H1 (cell line): ENCODE measurements at regions of chr5 and their contacts with region 1.

Region 1: DNA sequence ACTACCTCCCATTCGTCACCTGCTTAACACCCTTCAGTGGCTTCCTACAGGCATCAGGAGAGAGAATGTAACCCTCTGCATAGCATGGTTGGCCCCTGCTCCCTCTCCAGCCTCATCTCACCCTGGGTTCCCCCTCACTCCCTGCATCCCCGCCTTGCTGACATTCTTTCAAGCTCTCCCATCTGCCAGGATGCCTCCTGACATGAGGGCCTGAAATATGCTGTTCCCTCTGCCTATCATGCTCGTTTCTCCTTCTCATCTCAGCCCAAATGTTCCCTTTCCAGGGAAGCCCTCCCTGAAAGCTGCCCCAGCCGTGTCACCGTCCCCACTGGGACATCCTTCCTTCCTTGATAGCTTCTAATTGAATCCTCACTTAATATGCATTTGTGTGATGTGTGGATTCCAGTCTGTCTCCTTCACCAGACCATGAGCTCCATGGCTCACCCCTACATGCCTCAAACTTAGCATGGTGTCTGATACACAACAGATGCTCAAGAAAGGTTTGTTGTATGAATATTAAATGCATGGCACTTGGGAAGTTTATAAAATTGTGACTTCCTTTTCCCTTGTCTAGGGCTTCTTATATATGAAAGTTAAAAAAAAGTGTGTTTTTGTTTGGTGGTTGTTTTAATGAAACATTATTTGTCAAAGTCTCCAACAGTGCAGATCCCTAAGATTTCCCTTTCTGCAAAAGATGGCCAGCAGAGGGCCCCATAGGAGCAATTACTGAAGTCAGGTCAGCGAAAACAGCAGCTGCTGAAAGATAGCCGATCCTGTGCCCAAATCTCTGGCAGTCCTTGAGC is 7.3 kb upstream of the C5orf58 start:
- DNase-seq: peak in 1 of 2 experiments; percentile 84
- H3K4me3 ChIP-seq: no peak overlapping the region
- H3K27ac ChIP-seq: no peak overlapping the region
- H3K4me1 ChIP-seq: peaks cover 0 to 7% (median 2%) of the 10 kb centered on the region in 4 experiments; a peak in 4 of 7 replicates
- H3K27me3 ChIP-seq: peaks cover 0 to under 1% (median under 1%) of the 10 kb centered on the region in 4 experiments; a peak in 2 of 7 replicates
- CTCF ChIP-seq: peak; percentile 29 to 85 (median 65)
- EP300 ChIP-seq: no peak
- POLR2A ChIP-seq: no peak
- RAD21 ChIP-seq: peak; percentile 95 to 96

Region 2: DNA sequence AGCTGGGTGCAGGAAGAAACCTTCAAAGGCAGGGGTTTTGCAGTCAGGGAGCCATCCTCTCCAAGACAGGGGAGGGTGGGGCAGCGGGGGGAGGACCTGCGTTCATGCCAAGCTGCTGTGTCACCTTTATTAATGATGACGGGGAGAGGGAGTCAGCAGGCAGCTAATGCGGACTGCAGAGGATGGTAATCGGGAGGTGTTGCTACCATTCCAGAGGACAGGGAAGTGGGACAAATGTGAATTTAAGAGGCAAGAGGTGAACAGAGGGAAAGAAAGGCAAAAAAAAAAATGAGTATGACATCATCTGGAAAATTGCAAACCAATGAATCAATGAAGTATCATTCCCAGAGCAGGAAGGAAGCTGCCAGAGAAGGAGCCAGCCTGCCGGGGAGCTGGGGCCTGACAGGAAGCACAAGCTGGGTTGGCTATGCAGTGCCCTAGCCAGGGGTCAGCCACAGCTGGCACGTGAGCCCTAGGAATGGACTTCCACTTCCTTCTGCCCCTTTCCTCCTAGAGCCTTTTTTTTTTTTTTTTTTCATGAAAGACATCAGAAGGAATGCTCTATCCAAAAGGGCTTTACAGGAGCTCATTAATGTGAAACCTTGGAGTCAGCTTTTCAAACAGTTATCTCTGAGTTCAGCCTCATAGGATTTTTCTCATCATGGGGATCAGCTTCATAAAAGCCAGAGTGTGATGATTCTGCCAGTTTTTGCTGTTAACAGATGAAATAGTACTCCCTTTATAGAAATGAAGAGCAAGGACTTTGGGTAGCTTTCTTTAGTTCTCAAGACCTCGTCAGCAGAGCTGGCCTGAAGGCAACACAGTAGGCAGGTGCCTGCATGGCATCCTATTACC is 254.4 kb before region 1 on chr5:
- CTCF ChIA-PET with region 1: no interaction called
- POLR2A ChIA-PET with region 1: no interaction called
- DNase-seq: no peak
- H3K4me3 ChIP-seq: no peak overlapping the region
- H3K27ac ChIP-seq: no peak overlapping the region
- H3K4me1 ChIP-seq: peaks cover 0 to 4% (median 0%) of the 10 kb centered on the region in 4 experiments; a peak in 3 of 7 replicates
- H3K27me3 ChIP-seq: peaks cover 0 to under 1% (median 0%) of the 10 kb centered on the region in 4 experiments; a peak in 3 of 7 replicates
- CTCF ChIP-seq: no peak
- EP300 ChIP-seq: no peak
- POLR2A ChIP-seq: no peak
- RAD21 ChIP-seq: no peak

Region 3: DNA sequence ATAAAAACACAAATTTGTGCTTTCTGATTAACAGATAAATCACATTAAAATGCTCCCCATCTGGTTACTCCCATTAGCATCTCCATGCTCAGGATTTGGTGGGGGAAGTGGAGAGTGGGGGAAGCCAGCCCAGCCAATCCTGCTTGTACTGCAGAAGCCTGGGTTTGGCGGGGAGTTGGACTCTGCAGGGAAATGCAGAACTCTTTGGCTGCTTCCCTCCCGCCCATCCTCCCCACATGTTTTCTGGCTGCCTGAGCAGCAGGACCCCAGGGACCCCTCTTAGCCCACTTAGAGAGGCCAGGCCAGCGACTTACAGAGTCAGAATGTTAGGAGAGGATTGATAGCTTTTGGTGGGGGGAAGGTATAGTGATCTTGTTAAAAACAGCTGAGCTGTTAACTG is 179.3 kb before region 1 on chr5:
- CTCF ChIA-PET with region 1: no interaction called
- POLR2A ChIA-PET with region 1: no interaction called
- DNase-seq: no peak
- H3K4me3 ChIP-seq: no peak overlapping the region
- H3K27ac ChIP-seq: no peak overlapping the region
- H3K4me1 ChIP-seq: peaks cover 0 to 4% (median 3%) of the 10 kb centered on the region in 4 experiments; a peak in 3 of 7 replicates
- H3K27me3 ChIP-seq: no peaks in the 10 kb centered on the region
- CTCF ChIP-seq: no peak
- EP300 ChIP-seq: no peak
- POLR2A ChIP-seq: no peak
- RAD21 ChIP-seq: no peak

Region 4: DNA sequence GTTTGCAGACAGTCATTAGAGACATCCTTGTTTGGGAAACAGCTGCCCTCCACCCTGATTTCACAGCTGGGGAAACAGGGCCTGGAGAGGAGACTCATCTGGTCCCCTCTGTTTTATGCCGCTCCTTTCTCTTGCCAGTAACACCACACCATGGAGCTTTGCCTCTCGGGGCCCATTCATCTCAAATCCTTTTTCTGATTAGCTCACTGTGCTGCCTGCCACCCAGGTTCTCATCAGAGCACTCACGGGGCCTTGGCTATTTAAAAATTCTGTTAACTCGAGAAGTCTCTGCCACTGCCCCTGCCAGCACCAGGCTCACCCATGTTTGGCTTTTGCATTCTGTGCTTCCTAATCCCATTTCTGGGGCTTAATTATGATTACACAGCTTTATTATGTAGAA is 29.6 kb before region 1 on chr5:
- CTCF ChIA-PET with region 1: interaction called, 13 read pairs
- POLR2A ChIA-PET with region 1: no interaction called
- DNase-seq: no peak
- H3K4me3 ChIP-seq: no peak overlapping the region
- H3K27ac ChIP-seq: no peak overlapping the region
- H3K4me1 ChIP-seq: no peaks in the 10 kb centered on the region; a peak in 2 of 7 replicates
- H3K27me3 ChIP-seq: no peaks in the 10 kb centered on the region
- CTCF ChIP-seq: no peak
- EP300 ChIP-seq: no peak
- POLR2A ChIP-seq: no peak
- RAD21 ChIP-seq: no peak

Region 5: DNA sequence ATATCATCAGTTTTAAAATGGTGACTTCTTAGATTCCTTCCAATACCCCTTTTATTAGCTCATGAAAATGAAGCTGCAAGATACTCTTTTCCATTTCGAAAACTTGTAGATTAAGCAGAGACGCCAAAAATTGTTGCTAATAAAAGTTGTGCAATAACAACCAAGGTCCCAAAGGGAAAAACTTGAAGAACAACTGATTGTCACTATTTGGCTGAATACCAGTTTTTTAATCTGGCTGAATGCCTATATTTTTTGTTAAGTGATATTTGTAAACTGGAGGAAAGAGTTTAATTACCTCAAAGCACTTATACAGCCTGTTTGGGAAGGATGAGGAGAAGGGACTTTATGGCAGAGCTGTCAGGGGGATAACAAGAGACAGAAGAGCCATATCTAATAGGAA is 21.8 kb after region 1 on chr5:
- CTCF ChIA-PET with region 1: interaction called, 14 read pairs
- POLR2A ChIA-PET with region 1: no interaction called
- DNase-seq: no peak
- H3K4me3 ChIP-seq: no peak overlapping the region
- H3K27ac ChIP-seq: no peak overlapping the region
- H3K4me1 ChIP-seq: peaks cover 0 to 7% (median 4%) of the 10 kb centered on the region in 4 experiments; a peak in 3 of 7 replicates
- H3K27me3 ChIP-seq: no peaks in the 10 kb centered on the region
- CTCF ChIP-seq: no peak
- EP300 ChIP-seq: no peak
- POLR2A ChIP-seq: no peak
- RAD21 ChIP-seq: no peak

Region 6: GRCh38 chr5:170333161-170333910 is 107.8 kb after region 1 on chr5:
- CTCF ChIA-PET with region 1: interaction called, 50 read pairs
- POLR2A ChIA-PET with region 1: interaction called, 4 read pairs
- DNase-seq: peak in 1 of 2 experiments; percentile 67
- H3K4me3 ChIP-seq: peak overlapping the region in 1 of 4 experiments; percentile 15; a peak in 2 of 8 replicates
- H3K27ac ChIP-seq: no peak overlapping the region
- H3K4me1 ChIP-seq: peaks cover 7 to 31% (median 23%) of the 10 kb centered on the region in 4 experiments
- H3K27me3 ChIP-seq: no peaks in the 10 kb centered on the region
- CTCF ChIP-seq: no peak
- EP300 ChIP-seq: no peak
- POLR2A ChIP-seq: no peak
- RAD21 ChIP-seq: no peak; a peak in 1 of 4 replicates

Region 7: GRCh38 chr5:170357955-170358444 is 132.5 kb after region 1 on chr5:
- CTCF ChIA-PET with region 1: interaction called, 10 read pairs
- POLR2A ChIA-PET with region 1: no interaction called
- DNase-seq: no peak
- H3K4me3 ChIP-seq: no peak overlapping the region
- H3K27ac ChIP-seq: no peak overlapping the region
- H3K4me1 ChIP-seq: peaks cover 5 to 20% (median 13%) of the 10 kb centered on the region in 4 experiments
- H3K27me3 ChIP-seq: peaks cover 0 to 4% (median 1%) of the 10 kb centered on the region in 4 experiments; a peak in 3 of 7 replicates
- CTCF ChIP-seq: no peak
- EP300 ChIP-seq: no peak
- POLR2A ChIP-seq: no peak
- RAD21 ChIP-seq: no peak

Region 8: DNA sequence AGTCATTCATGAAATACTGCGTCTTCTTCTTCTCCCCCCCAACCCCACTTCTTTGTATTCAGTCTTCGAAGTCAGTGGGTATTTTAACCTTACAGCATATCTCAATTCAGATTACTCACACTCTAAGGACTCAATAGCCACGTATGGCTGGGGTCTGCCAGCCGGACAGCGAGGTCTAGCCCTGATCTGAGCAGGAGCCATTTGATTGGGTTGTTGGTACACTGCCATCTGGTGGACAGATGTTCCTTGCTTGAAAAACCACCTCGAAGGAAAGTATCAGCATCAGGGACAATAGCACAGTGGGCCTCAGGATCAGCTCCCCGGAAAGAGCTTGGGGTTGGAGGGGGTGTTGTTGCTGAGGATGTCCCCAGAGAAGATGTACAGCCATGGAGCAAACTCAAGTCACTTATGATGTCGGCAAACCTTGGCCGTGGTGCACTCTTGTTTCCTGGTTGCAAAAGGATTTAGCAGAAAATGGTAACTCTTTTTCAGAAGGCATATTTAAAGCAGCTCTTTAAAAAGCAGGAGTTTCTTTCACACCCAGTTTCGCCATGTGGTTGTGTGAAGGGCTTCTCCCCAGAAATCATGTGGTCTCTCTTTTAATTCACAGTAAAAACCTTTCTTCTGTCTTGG is 195.4 kb after region 1 on chr5:
- CTCF ChIA-PET with region 1: interaction called, 151 read pairs
- POLR2A ChIA-PET with region 1: no interaction called
- DNase-seq: peak in 1 of 2 experiments; percentile 72
- H3K4me3 ChIP-seq: no peak overlapping the region
- H3K27ac ChIP-seq: no peak overlapping the region
- H3K4me1 ChIP-seq: peaks cover 0 to 2% (median 0%) of the 10 kb centered on the region in 4 experiments; a peak in 2 of 7 replicates
- H3K27me3 ChIP-seq: no peaks in the 10 kb centered on the region
- CTCF ChIP-seq: peak; percentile 51 to 89 (median 87)
- EP300 ChIP-seq: no peak
- POLR2A ChIP-seq: no peak
- RAD21 ChIP-seq: peak; percentile 82 to 85